ENCODE measurements at regions of chr2 and their contacts with region 1.

Region 1: GRCh38 chr2:105888625-105889400 is 144.1 kb downstream of the NCK2 start:
- DNase-seq: no peak
- H3K4me3 ChIP-seq: no peak overlapping the region
- H3K27ac ChIP-seq: peak overlapping the region; percentile 36
- H3K4me1 ChIP-seq: peaks cover 67% of the 10 kb centered on the region
- H3K27me3 ChIP-seq: no peaks in the 10 kb centered on the region
- CTCF ChIP-seq: no peak

Region 2: GRCh38 chr2:105775809-105776559 is 112.8 kb before region 1 on chr2:
- intact Hi-C with region 1: no loop called
- DNase-seq: no peak
- H3K4me3 ChIP-seq: no peak overlapping the region
- H3K27ac ChIP-seq: peak overlapping the region; percentile 52
- H3K4me1 ChIP-seq: peaks cover 89% of the 10 kb centered on the region
- H3K27me3 ChIP-seq: no peaks in the 10 kb centered on the region
- CTCF ChIP-seq: no peak

Region 3: GRCh38 chr2:105789745-105790460 is 98.9 kb before region 1 on chr2:
- intact Hi-C with region 1: loop called (anchors 10 kb)
- DNase-seq: no peak
- H3K4me3 ChIP-seq: peak overlapping the region; percentile 32
- H3K27ac ChIP-seq: peak overlapping the region; percentile 41
- H3K4me1 ChIP-seq: peaks cover 78% of the 10 kb centered on the region
- H3K27me3 ChIP-seq: no peaks in the 10 kb centered on the region
- CTCF ChIP-seq: peak; percentile 29

Region 4: GRCh38 chr2:106053116-106053515 is 164.3 kb after region 1 on chr2:
- intact Hi-C with region 1: no loop called
- DNase-seq: no peak
- H3K4me3 ChIP-seq: no peak overlapping the region
- H3K27ac ChIP-seq: no peak overlapping the region
- H3K4me1 ChIP-seq: no peaks in the 10 kb centered on the region
- H3K27me3 ChIP-seq: no peaks in the 10 kb centered on the region
- CTCF ChIP-seq: no peak